ENCODE measurements at regions of chr15 and their contacts with region 1.

Region 1: GRCh38 chr15:40593588-40594428 is at the start of gene KNL1:
- DNase-seq: peak; percentile 83 to 94 (median 91)
- ATAC-seq: peak; percentile 85
- H3K4me3 ChIP-seq: peak within 1 kb of the TSS; percentile 98
- H3K4me3 Mint-ChIP-seq: peak within 1 kb of the TSS; percentile 91 to 99 (median 96)
- H3K27ac ChIP-seq: peak within 1 kb of the TSS; percentile 83
- H3K27ac Mint-ChIP-seq: peak within 1 kb of the TSS; percentile 91 to 100 (median 98)
- H3K4me1 ChIP-seq: peaks cover 11 to 12% of the 10 kb centered on the region in 2 donors
- H3K4me1 Mint-ChIP-seq: peaks cover 13 to 41% (median 25%) of the 10 kb centered on the region in 7 donors
- H3K27me3 ChIP-seq: no peaks in the 10 kb centered on the region
- H3K27me3 Mint-ChIP-seq: peaks cover 0 to 12% (median 6%) of the 10 kb centered on the region in 5 donors
- total RNA-seq, gene KNL1: 0.16 to 41.5 (median 1.7) TPM

Region 2: GRCh38 chr15:40684381-40684780 is 90.6 kb after region 1 on chr15:
- CTCF ChIA-PET with region 1: no interaction called
- POLR2A ChIA-PET with region 1: no interaction called
- intact Hi-C with region 1: loop called (anchors 5 kb)
- DNase-seq: no peak
- ATAC-seq: no peak
- H3K4me3 ChIP-seq: no peak overlapping the region
- H3K4me3 Mint-ChIP-seq: no peak overlapping the region
- H3K27ac ChIP-seq: no peak overlapping the region
- H3K27ac Mint-ChIP-seq: peak overlapping the region in 3 of 9 donors; percentile 41 to 57 (median 47)
- H3K4me1 ChIP-seq: no peaks in the 10 kb centered on the region
- H3K4me1 Mint-ChIP-seq: peaks cover 0 to under 1% (median 0%) of the 10 kb centered on the region in 7 donors
- H3K27me3 ChIP-seq: no peaks in the 10 kb centered on the region
- H3K27me3 Mint-ChIP-seq: peaks cover 0 to 3% (median 0%) of the 10 kb centered on the region in 5 donors

Region 3: DNA sequence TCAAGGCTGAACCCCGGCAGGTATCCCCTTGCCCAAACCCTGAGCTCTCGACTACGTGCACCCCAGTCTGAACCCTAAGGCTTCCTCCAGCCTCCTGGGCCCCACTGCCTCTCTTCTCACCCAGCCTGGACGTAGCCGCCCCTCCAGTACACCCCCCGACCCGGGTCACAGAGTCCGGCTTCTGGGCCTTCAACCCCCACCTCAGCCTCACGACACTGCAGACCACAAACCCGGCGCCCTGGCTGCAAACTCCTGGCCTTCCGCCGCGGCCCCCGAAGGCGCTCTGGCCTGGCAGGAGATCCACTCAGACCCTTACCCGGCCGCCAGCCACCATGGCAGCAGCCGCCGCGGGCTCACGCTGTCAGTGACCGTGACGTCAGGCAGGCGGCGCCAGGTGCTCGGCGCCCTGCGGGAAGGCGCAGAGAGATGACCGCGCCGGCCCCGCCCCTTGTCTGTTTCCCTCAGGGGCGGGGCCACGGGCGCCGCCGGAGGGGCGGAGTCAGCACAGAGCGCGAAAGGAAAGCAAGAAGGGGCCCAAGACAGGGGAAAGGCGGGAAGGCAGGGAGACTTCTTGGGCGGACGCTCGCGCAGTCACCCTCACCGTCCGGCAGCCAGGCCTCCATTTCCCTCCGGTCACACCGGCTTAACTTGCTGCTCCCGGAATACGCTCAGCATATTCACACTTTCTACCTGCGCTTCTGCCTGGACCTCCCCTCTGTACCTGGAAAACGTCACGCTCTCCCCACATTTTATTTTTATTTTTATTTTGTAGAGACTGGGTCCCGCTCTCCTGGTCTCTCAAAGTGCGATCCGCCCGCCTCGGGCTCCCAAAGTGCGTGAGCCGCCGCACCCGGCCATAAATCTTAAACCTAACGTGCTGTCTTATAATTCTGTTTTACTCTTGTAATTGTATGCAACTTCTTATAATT is 161.3 kb after region 1 on chr15 and contains the start of gene RMDN3:
- CTCF ChIA-PET with region 1: no interaction called
- POLR2A ChIA-PET with region 1: no interaction called
- intact Hi-C with region 1: loop called in 1 of 2 experiments (anchors 1 kb)
- DNase-seq: peak; percentile 89 to 97 (median 92)
- ATAC-seq: peak; percentile 99
- H3K4me3 ChIP-seq: peak within 1 kb of the TSS; percentile 94
- H3K4me3 Mint-ChIP-seq: peak within 1 kb of the TSS; percentile 90 to 98 (median 94)
- H3K27ac ChIP-seq: peak within 1 kb of the TSS; percentile 95
- H3K27ac Mint-ChIP-seq: peak within 1 kb of the TSS; percentile 89 to 99 (median 95)
- H3K4me1 ChIP-seq: peaks cover 7 to 10% of the 10 kb centered on the region in 2 donors
- H3K4me1 Mint-ChIP-seq: peaks cover 16 to 37% (median 27%) of the 10 kb centered on the region in 7 donors
- H3K27me3 ChIP-seq: no peaks in the 10 kb centered on the region
- H3K27me3 Mint-ChIP-seq: no peaks in the 10 kb centered on the region
- total RNA-seq, gene RMDN3: 19.5 to 44.0 (median 31.9) TPM

Region 4: GRCh38 chr15:40769274-40770146 is 175.7 kb after region 1 on chr15 and contains the start of gene C15orf62:
- CTCF ChIA-PET with region 1: no interaction called
- POLR2A ChIA-PET with region 1: no interaction called
- intact Hi-C with region 1: loop called in 1 of 2 experiments (anchors 5 kb)
- DNase-seq: peak in 7 of 9 donors; percentile 33 to 71 (median 45)
- ATAC-seq: peak; percentile 58
- H3K4me3 ChIP-seq: no peak within 1 kb of the TSS
- H3K4me3 Mint-ChIP-seq: peak within 1 kb of the TSS; percentile 42 to 73 (median 62)
- H3K27ac ChIP-seq: peak within 1 kb of the TSS; percentile 59
- H3K27ac Mint-ChIP-seq: peak within 1 kb of the TSS; percentile 80 to 93 (median 88)
- H3K4me1 ChIP-seq: peaks cover 10 to 27% of the 10 kb centered on the region in 2 donors
- H3K4me1 Mint-ChIP-seq: peaks cover 24 to 46% (median 36%) of the 10 kb centered on the region in 7 donors
- H3K27me3 ChIP-seq: no peaks in the 10 kb centered on the region
- H3K27me3 Mint-ChIP-seq: no peaks in the 10 kb centered on the region
- total RNA-seq, gene C15orf62: 0.73 to 2.8 (median 1.3) TPM

Region 5: DNA sequence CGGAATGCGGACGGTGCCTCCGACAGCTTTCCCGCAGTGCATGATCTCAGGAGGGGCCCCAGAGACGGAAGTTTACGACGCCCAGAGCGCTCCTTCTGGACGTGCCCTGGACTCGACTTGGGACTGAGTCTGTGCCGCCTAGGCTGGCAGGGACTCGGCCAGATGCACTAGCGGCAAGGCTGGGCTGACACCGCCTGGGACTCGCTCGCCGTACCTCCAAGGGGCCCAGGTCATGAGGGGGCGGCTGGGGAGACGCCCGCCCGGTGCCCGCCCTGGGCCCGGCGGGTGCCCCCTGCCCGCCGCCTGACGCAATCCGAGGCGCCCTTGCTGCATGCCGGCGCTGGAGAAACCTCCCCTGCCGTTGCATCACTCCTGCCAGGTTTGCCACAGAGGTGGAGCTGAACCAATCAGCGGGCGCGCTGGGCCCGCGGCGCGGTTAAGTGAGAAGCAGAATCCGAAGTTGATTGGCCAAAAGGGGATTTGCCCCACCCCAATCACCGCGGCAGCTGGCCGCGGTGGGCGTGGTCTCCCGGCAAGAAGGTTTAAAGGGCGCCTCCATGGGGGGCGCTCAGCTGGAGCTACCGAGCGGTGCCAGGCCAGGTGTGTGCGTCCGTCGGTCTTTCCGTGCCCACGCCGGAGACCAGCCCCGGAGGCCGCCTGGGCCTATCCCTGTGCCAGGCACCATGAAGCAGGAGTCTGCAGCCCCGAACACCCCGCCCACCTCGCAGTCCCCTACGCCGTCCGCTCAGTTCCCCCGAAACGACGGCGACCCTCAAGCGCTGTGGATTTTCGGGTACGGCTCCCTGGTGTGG is 359.3 kb after region 1 on chr15 and contains the start of gene CHAC1:
- CTCF ChIA-PET with region 1: no interaction called
- POLR2A ChIA-PET with region 1: no interaction called
- intact Hi-C with region 1: loop called in 1 of 2 experiments (anchors 1 kb)
- DNase-seq: peak; percentile 79 to 97 (median 94)
- ATAC-seq: peak; percentile 98
- H3K4me3 ChIP-seq: peak within 1 kb of the TSS; percentile 68
- H3K4me3 Mint-ChIP-seq: peak within 1 kb of the TSS; percentile 87 to 96 (median 94)
- H3K27ac ChIP-seq: peak within 1 kb of the TSS; percentile 74
- H3K27ac Mint-ChIP-seq: peak within 1 kb of the TSS in 8 of 9 donors; percentile 76 to 95 (median 88)
- H3K4me1 ChIP-seq: peaks cover 10 to 14% of the 10 kb centered on the region in 2 donors
- H3K4me1 Mint-ChIP-seq: peaks cover 7 to 34% (median 19%) of the 10 kb centered on the region in 7 donors
- H3K27me3 ChIP-seq: no peaks in the 10 kb centered on the region
- H3K27me3 Mint-ChIP-seq: peaks cover 0 to 4% (median 0%) of the 10 kb centered on the region in 5 donors
- total RNA-seq, gene CHAC1: 0.24 to 5.7 (median 1.1) TPM

Region 6: GRCh38 chr15:41331833-41332787 is 738.3 kb after region 1 on chr15 and contains the start of gene OIP5:
- CTCF ChIA-PET with region 1: no interaction called
- POLR2A ChIA-PET with region 1: no interaction called
- intact Hi-C with region 1: loop called in 1 of 2 experiments (anchors 2 kb)
- DNase-seq: peak; percentile 83 to 99 (median 97)
- ATAC-seq: peak; percentile 98
- H3K4me3 ChIP-seq: peak within 1 kb of the TSS; percentile 95
- H3K4me3 Mint-ChIP-seq: peak within 1 kb of the TSS; percentile 87 to 100 (median 97)
- H3K27ac ChIP-seq: peak within 1 kb of the TSS; percentile 52
- H3K27ac Mint-ChIP-seq: peak within 1 kb of the TSS; percentile 77 to 97 (median 91)
- H3K4me1 ChIP-seq: peaks cover 9 to 13% of the 10 kb centered on the region in 2 donors
- H3K4me1 Mint-ChIP-seq: peaks cover 12 to 32% (median 29%) of the 10 kb centered on the region in 7 donors
- H3K27me3 ChIP-seq: no peaks in the 10 kb centered on the region
- H3K27me3 Mint-ChIP-seq: no peaks in the 10 kb centered on the region
- total RNA-seq, gene OIP5: 0.32 to 15.2 (median 0.54) TPM in 4 of 5 experiments, not detected in the other

Measured in naive thymus-derived CD4-positive, alpha-beta T cell (primary cell).